ENCODE measurements at regions of chr10 and their contacts with region 1.

Region 1: DNA sequence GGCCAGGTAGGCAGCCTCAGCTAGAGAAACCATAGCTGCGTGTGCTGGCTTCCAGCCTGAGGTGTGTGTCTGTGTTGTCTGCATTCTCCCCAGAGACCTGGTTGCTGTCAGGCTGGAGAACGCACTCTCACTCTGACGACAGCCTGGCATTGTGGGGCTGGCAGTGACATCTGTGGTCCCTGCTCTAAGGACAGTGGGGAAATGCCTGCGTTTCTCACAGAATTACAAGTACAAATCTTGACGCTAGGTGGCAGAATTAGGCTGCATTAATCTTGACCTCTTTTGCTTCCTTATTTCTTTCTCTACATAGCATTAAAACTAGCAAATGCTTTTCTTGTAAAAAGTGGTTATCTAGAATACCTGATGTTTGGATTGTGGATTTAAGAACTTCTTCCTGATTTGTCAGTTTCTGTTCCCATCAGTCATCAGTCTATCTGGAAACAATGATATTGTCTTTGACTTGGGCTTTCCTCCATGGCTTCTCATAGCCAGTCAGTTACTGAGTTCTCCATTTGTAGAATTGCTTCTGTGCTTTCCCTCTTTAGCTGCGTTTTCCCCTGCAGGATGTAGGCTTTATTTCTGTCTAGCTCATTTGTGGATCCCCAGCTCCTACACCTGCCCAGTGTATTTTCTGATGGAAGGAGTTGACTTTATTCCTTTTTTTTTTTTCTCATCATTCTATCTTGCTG is 86.0 kb downstream of the FANK1 start:
- DNase-seq: peak in 1 of 2 donors; percentile 61
- ATAC-seq: peak in 7 of 8 donors; percentile 60 to 81 (median 68)
- H3K4me3 ChIP-seq: no peak overlapping the region
- H3K27ac ChIP-seq: no peak overlapping the region
- H3K4me1 ChIP-seq: peaks cover 0 to 4% (median 0%) of the 10 kb centered on the region in 9 donors
- H3K27me3 ChIP-seq: peaks cover 0 to 10% (median 0%) of the 10 kb centered on the region in 7 donors
- CTCF ChIP-seq: peak; percentile 31 to 87 (median 69)

Region 2: GRCh38 chr10:125868372-125868975 is 113.9 kb before region 1 on chr10:
- intact Hi-C with region 1: loop called in 1 of 10 experiments (anchors 10 kb)
- DNase-seq: no peak
- ATAC-seq: peak in 1 of 8 donors; percentile 41
- H3K4me3 ChIP-seq: no peak overlapping the region
- H3K27ac ChIP-seq: no peak overlapping the region
- H3K4me1 ChIP-seq: peaks cover 0 to 2% (median 0%) of the 10 kb centered on the region in 9 donors
- H3K27me3 ChIP-seq: no peaks in the 10 kb centered on the region
- CTCF ChIP-seq: peak; percentile 50 to 84 (median 79)

Region 3: GRCh38 chr10:126387023-126387921 is 404.9 kb after region 1 on chr10:
- intact Hi-C with region 1: loop called in 8 of 10 experiments (anchors 2 to 10 kb)
- DNase-seq: peak; percentile 42 to 49
- ATAC-seq: peak in 6 of 8 donors; percentile 39 to 78 (median 56)
- H3K4me3 ChIP-seq: peak overlapping the region; percentile 18 to 62 (median 52)
- H3K27ac ChIP-seq: peak overlapping the region in 5 of 10 donors; percentile 5 to 78 (median 51)
- H3K4me1 ChIP-seq: peaks cover 3 to 23% (median 6%) of the 10 kb centered on the region in 9 donors
- H3K27me3 ChIP-seq: peaks cover 0 to 71% (median 55%) of the 10 kb centered on the region in 7 donors
- CTCF ChIP-seq: peak; percentile 27 to 83 (median 71)

Region 4: GRCh38 chr10:126749015-126749655 is 766.7 kb after region 1 on chr10:
- intact Hi-C with region 1: loop called in 8 of 10 experiments (anchors 2 to 10 kb)
- DNase-seq: peak; percentile 53 to 56
- ATAC-seq: peak in 7 of 8 donors; percentile 69 to 86 (median 74)
- H3K4me3 ChIP-seq: no peak overlapping the region
- H3K27ac ChIP-seq: no peak overlapping the region
- H3K4me1 ChIP-seq: no peaks in the 10 kb centered on the region
- H3K27me3 ChIP-seq: peaks cover 0 to 3% (median 0%) of the 10 kb centered on the region in 7 donors
- CTCF ChIP-seq: peak; percentile 50 to 80 (median 75)

Region 5: DNA sequence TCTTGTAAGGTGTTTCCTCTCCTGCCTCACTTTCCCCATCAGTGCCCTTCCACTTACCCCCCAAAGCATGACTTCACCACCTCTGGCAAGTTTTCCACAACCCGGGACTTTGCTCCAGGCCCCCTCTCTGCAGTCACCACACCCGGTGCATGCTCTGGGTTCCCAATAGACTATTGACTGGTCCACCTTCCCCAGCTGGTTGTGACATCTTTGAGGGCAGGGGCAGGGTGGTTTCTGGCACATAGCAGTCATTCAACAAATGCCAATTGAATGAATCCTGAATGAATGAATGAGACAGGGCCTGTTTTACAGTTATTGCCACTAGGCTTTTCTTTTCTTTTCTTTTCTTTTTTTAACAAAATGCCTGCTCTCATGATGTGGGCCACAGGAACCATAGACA is 894.0 kb after region 1 on chr10:
- intact Hi-C with region 1: no loop called
- DNase-seq: no peak
- ATAC-seq: no peak
- H3K4me3 ChIP-seq: no peak overlapping the region
- H3K27ac ChIP-seq: no peak overlapping the region
- H3K4me1 ChIP-seq: no peaks in the 10 kb centered on the region
- H3K27me3 ChIP-seq: peaks cover 0 to 51% (median 19%) of the 10 kb centered on the region in 7 donors
- CTCF ChIP-seq: no peak

Region 6: DNA sequence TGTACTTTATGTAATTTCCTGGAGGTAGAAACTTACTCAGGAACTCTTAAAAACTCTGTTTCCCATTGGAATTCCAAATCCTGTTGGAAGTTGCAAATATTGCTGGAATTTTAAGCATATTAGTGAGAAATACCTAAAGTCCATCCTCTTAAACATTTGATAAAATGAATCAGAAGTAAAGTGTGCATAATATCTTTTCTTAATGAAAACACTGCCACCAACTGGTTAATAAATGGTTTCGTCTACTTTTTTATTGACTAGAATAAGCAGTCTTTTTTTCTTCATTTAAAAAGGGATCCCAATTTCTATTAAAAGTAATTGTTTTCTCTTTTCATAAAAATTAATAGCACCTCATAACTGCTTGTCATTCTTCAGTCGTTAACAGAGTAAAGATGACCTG is 1595.0 kb after region 1 on chr10:
- intact Hi-C with region 1: loop called in 2 of 10 experiments (anchors 5 to 10 kb)
- DNase-seq: no peak
- ATAC-seq: no peak
- H3K4me3 ChIP-seq: no peak overlapping the region
- H3K27ac ChIP-seq: peak overlapping the region in 4 of 10 donors; percentile 58 to 87 (median 81)
- H3K4me1 ChIP-seq: peaks cover 0 to 43% (median 28%) of the 10 kb centered on the region in 9 donors
- H3K27me3 ChIP-seq: no peaks in the 10 kb centered on the region
- CTCF ChIP-seq: peak in 6 of 9 donors; percentile 13 to 56 (median 30)

Region 7: DNA sequence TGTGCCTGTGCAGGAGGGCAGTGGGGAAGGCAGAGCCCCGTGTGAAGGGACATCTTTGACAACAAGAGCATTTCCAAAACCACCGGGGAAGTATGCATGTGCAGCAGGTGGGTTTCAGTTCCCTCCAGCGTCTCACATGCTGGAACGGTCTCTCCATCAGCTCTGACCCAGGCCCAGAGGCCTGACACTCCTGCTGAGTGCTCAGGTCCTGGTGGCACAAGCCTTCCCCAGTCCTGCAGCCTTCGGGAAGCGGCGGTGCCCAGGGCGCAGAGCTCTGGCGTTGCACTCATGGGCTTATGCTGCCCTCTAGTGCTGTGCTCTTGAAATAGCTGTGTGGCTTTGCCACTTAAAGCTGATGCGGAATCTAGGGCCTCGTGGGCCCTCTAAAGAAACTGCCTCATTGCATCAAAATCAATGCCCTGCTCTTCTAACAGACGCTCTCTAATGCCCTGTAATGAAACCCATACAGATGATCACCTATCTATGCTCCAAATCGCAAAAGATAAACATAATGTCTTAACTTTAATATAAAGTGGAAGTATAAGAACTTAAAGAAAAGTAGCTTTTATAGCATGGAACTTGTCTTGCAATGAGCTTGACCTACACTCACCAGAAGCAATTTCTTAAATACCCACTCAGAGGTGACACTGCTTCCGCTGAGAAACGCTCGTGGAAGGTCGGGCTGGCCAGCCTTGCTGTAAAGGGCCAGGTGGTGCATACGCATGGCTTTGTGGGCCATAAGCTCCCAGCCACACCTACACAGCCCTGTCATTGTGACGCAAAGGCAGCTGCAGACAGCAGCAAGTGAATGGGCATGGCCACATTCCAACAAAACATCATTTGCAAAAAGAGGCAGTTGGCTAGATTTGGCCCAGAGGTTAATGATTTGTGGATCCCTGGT is 1871.7 kb after region 1 on chr10:
- intact Hi-C with region 1: loop called in 3 of 10 experiments (anchors 5 to 10 kb)
- DNase-seq: peak; percentile 48 to 69
- ATAC-seq: peak; percentile 78 to 94 (median 90)
- H3K4me3 ChIP-seq: no peak overlapping the region
- H3K27ac ChIP-seq: no peak overlapping the region
- H3K4me1 ChIP-seq: peaks cover 0 to 8% (median 4%) of the 10 kb centered on the region in 9 donors
- H3K27me3 ChIP-seq: peaks cover 0 to 24% (median 8%) of the 10 kb centered on the region in 7 donors
- CTCF ChIP-seq: peak; percentile 78 to 90 (median 81)

Measured in heart right ventricle (tissue), 16 donors.